Lower leg skin (tissue), 4 donors: ENCODE measurements at regions of chr12 and their contacts with region 1.

Region 1: DNA sequence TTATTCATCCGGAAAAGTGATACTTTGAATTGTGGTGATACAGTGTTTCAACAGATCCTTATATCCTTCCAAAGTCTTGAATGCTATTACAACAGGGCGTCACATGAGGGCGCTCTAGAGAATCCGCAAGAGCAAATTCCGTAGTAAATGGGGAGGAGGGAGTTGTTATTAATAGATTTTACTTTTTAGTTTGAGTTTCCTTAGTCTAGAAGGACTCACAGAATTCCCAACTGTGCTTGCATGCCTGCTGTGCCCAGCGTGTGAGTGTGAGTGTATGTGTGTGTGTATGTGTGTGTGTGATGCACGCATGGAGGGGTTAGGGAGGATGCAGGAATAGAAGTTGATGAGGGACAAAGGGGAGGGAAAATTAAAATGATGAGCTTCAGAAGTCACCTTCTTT is 375.3 kb downstream of the C12orf75 start:
- DNase-seq: peak in 1 of 2 donors; percentile 38
- H3K4me3 ChIP-seq: no peak overlapping the region
- CTCF ChIP-seq: peak in 1 of 3 donors; percentile 28
- POLR2A ChIP-seq: no peak

Region 2: DNA sequence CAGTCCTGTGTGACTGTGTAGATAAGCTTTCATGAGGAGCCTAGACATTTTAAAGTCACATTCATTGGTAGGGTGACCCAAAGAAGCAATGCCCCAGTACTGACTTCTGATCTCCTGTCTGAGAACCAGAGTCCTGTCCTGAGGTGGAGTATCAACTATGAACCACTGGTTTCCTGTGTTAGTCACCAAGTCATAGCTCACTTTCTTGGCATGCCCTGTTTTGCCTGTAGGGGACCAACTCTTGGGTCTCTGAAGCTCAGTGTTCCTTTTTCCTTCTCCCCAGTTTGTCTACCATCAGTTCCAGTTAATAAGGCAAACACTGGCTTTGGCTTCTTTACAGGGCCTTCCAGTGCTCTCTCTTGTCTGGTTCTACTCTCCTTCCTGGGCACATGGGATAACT is 277.9 kb before region 1 on chr12:
- intact Hi-C with region 1: loop called (anchors 1 kb)
- DNase-seq: no peak
- H3K4me3 ChIP-seq: no peak overlapping the region
- CTCF ChIP-seq: no peak
- POLR2A ChIP-seq: no peak

Region 3: GRCh38 chr12:106136263-106136662 is 430.5 kb after region 1 on chr12:
- intact Hi-C with region 1: loop called (anchors 10 kb)
- DNase-seq: peak; percentile 91 to 99
- H3K4me3 ChIP-seq: peak overlapping the region; percentile 18
- CTCF ChIP-seq: peak in 1 of 3 donors; percentile 67
- POLR2A ChIP-seq: no peak